Naive thymus-derived CD4-positive, alpha-beta T cell (primary cell): ENCODE measurements at regions of chr2 and their contacts with region 1.

Region 1: DNA sequence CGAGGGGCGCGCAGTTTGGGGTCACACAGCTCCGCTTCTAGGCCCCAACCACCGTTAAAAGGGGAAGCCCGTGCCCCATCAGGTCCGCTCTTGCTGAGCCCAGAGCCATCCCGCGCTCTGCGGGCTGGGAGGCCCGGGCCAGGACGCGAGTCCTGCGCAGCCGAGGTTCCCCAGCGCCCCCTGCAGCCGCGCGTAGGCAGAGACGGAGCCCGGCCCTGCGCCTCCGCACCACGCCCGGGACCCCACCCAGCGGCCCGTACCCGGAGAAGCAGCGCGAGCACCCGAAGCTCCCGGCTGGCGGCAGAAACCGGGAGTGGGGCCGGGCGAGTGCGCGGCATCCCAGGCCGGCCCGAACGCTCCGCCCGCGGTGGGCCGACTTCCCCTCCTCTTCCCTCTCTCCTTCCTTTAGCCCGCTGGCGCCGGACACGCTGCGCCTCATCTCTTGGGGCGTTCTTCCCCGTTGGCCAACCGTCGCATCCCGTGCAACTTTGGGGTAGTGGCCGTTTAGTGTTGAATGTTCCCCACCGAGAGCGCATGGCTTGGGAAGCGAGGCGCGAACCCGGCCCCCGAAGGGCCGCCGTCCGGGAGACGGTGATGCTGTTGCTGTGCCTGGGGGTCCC is at the start of gene ITGA4:
- DNase-seq: peak; percentile 77 to 89 (median 83)
- ATAC-seq: peak; percentile 92
- H3K4me3 ChIP-seq: peak within 1 kb of the TSS; percentile 91
- H3K4me3 Mint-ChIP-seq: peak within 1 kb of the TSS; percentile 89 to 99 (median 95)
- H3K27ac ChIP-seq: peak within 1 kb of the TSS; percentile 82
- H3K27ac Mint-ChIP-seq: peak within 1 kb of the TSS; percentile 81 to 98 (median 95)
- H3K4me1 ChIP-seq: peaks cover 13 to 24% of the 10 kb centered on the region in 2 donors
- H3K4me1 Mint-ChIP-seq: peaks cover 34 to 65% (median 54%) of the 10 kb centered on the region in 7 donors
- H3K27me3 ChIP-seq: no peaks in the 10 kb centered on the region
- H3K27me3 Mint-ChIP-seq: no peaks in the 10 kb centered on the region
- total RNA-seq, gene ITGA4: 135 to 212 (median 159) TPM

Region 2: GRCh38 chr2:180006781-180007579 is 1450.3 kb before region 1 on chr2 and contains the start of gene CWC22:
- CTCF ChIA-PET with region 1: no interaction called
- POLR2A ChIA-PET with region 1: no interaction called
- intact Hi-C with region 1: loop called in 1 of 2 experiments (anchors 2 kb)
- DNase-seq: peak; percentile 73 to 93 (median 89)
- ATAC-seq: peak; percentile 96
- H3K4me3 ChIP-seq: peak within 1 kb of the TSS; percentile 96
- H3K4me3 Mint-ChIP-seq: peak within 1 kb of the TSS; percentile 92 to 100 (median 96)
- H3K27ac ChIP-seq: peak within 1 kb of the TSS; percentile 93
- H3K27ac Mint-ChIP-seq: peak within 1 kb of the TSS; percentile 98 to 100 (median 99)
- H3K4me1 ChIP-seq: peaks cover 8 to 11% of the 10 kb centered on the region in 2 donors
- H3K4me1 Mint-ChIP-seq: peaks cover 19 to 54% (median 49%) of the 10 kb centered on the region in 7 donors
- H3K27me3 ChIP-seq: no peaks in the 10 kb centered on the region
- H3K27me3 Mint-ChIP-seq: peaks cover 0 to 3% (median 0%) of the 10 kb centered on the region in 5 donors
- total RNA-seq, gene CWC22: 14.4 to 32.0 (median 23.5) TPM

Region 3: GRCh38 chr2:180905002-180905401 is 552.2 kb before region 1 on chr2:
- CTCF ChIA-PET with region 1: no interaction called
- POLR2A ChIA-PET with region 1: no interaction called
- intact Hi-C with region 1: no loop called
- DNase-seq: no peak
- ATAC-seq: no peak
- H3K4me3 ChIP-seq: no peak overlapping the region
- H3K4me3 Mint-ChIP-seq: no peak overlapping the region
- H3K27ac ChIP-seq: no peak overlapping the region
- H3K27ac Mint-ChIP-seq: no peak overlapping the region
- H3K4me1 ChIP-seq: no peaks in the 10 kb centered on the region
- H3K4me1 Mint-ChIP-seq: no peaks in the 10 kb centered on the region
- H3K27me3 ChIP-seq: no peaks in the 10 kb centered on the region
- H3K27me3 Mint-ChIP-seq: peaks cover 5 to 35% (median 18%) of the 10 kb centered on the region in 5 donors

Region 4: GRCh38 chr2:181123798-181124231 is 333.4 kb before region 1 on chr2:
- CTCF ChIA-PET with region 1: interaction called, 4 read pairs
- POLR2A ChIA-PET with region 1: interaction called, 15 read pairs
- intact Hi-C with region 1: loop called (anchors 1 kb)
- DNase-seq: peak in 8 of 9 donors; percentile 54 to 91 (median 83)
- ATAC-seq: peak; percentile 98
- H3K4me3 ChIP-seq: peak overlapping the region; percentile 37
- H3K4me3 Mint-ChIP-seq: peak overlapping the region; percentile 73 to 92 (median 82)
- H3K27ac ChIP-seq: peak overlapping the region; percentile 83
- H3K27ac Mint-ChIP-seq: peak overlapping the region; percentile 94 to 100 (median 98)
- H3K4me1 ChIP-seq: peaks cover 39 to 47% of the 10 kb centered on the region in 2 donors
- H3K4me1 Mint-ChIP-seq: peaks cover 27 to 81% (median 78%) of the 10 kb centered on the region in 7 donors
- H3K27me3 ChIP-seq: no peaks in the 10 kb centered on the region
- H3K27me3 Mint-ChIP-seq: no peaks in the 10 kb centered on the region

Region 5: DNA sequence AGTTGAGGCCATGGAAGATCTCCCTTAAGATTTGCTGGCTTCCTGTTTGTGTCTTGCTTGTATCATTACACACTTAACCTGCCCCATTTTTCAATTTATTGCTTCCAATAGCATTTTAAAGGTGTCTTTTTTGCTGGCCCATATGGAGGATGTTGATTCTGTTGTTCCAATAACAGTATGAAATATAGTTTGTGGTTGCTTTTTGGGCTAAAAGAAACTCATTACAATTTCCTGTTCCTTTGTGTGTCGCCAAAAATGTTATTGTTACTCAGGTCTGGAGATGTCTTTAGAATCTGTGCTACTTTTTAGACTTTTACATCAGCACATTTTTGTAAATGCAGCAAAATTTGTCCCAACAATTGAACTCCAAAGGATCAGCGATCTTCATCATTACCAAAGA is 234.0 kb before region 1 on chr2:
- CTCF ChIA-PET with region 1: interaction called, 3 read pairs
- POLR2A ChIA-PET with region 1: interaction called, 4 read pairs
- intact Hi-C with region 1: loop called in 1 of 2 experiments (anchors 5 kb)
- DNase-seq: peak in 6 of 9 donors; percentile 13 to 54 (median 44)
- ATAC-seq: no peak
- H3K4me3 ChIP-seq: peak overlapping the region; percentile 0
- H3K4me3 Mint-ChIP-seq: peak overlapping the region in 9 of 10 donors; percentile 58 to 84 (median 66)
- H3K27ac ChIP-seq: peak overlapping the region; percentile 4
- H3K27ac Mint-ChIP-seq: peak overlapping the region; percentile 57 to 97 (median 88)
- H3K4me1 ChIP-seq: peaks cover 25% of the 10 kb centered on the region in 2 donors
- H3K4me1 Mint-ChIP-seq: peaks cover 7 to 64% (median 37%) of the 10 kb centered on the region in 7 donors
- H3K27me3 ChIP-seq: no peaks in the 10 kb centered on the region
- H3K27me3 Mint-ChIP-seq: no peaks in the 10 kb centered on the region

Region 6: DNA sequence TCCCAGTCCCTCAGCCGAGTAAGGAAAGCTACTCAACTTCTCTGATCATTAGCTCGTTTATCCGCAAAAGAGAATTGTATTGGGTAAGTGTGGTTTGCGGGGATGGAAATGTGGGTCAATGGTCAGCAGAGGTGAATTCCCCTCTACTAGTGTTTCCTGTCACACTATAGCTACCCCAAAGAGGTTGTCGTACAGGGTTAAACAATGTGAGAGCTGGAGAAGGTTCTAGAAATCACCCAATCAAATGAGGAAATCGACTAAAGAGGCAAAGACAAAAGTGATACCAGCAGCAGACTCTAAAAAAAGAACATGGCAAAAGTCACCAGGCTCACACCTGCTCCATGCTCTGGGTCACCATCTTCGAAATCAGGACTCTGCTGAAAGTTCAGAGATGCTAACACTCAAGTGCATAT is 144.7 kb before region 1 on chr2:
- CTCF ChIA-PET with region 1: interaction called, 15 read pairs
- POLR2A ChIA-PET with region 1: interaction called, 69 read pairs
- intact Hi-C with region 1: loop called in 1 of 2 experiments (anchors 1 kb)
- DNase-seq: peak in 2 of 9 donors; percentile 47 to 54
- ATAC-seq: peak; percentile 64
- H3K4me3 ChIP-seq: peak overlapping the region; percentile 4
- H3K4me3 Mint-ChIP-seq: peak overlapping the region; percentile 60 to 92 (median 80)
- H3K27ac ChIP-seq: peak overlapping the region; percentile 66
- H3K27ac Mint-ChIP-seq: peak overlapping the region; percentile 90 to 100 (median 96)
- H3K4me1 ChIP-seq: peaks cover 35 to 47% of the 10 kb centered on the region in 2 donors
- H3K4me1 Mint-ChIP-seq: peaks cover 28 to 67% (median 57%) of the 10 kb centered on the region in 7 donors
- H3K27me3 ChIP-seq: no peaks in the 10 kb centered on the region
- H3K27me3 Mint-ChIP-seq: no peaks in the 10 kb centered on the region

Region 7: GRCh38 chr2:181438261-181438660 is 19.0 kb before region 1 on chr2:
- CTCF ChIA-PET with region 1: interaction called, 4 read pairs
- POLR2A ChIA-PET with region 1: interaction called, 4 read pairs
- intact Hi-C with region 1: loop called (anchors 1 kb)
- DNase-seq: peak in 1 of 9 donors; percentile 34
- ATAC-seq: peak; percentile 37
- H3K4me3 ChIP-seq: no peak overlapping the region
- H3K4me3 Mint-ChIP-seq: no peak overlapping the region
- H3K27ac ChIP-seq: no peak overlapping the region
- H3K27ac Mint-ChIP-seq: peak overlapping the region in 1 of 9 donors; percentile 45
- H3K4me1 ChIP-seq: no peaks in the 10 kb centered on the region
- H3K4me1 Mint-ChIP-seq: peaks cover 0 to 28% (median 15%) of the 10 kb centered on the region in 7 donors
- H3K27me3 ChIP-seq: no peaks in the 10 kb centered on the region
- H3K27me3 Mint-ChIP-seq: peaks cover 0 to 2% (median 0%) of the 10 kb centered on the region in 5 donors

Region 8: GRCh38 chr2:181742922-181743722 is 285.9 kb after region 1 on chr2:
- CTCF ChIA-PET with region 1: no interaction called
- POLR2A ChIA-PET with region 1: no interaction called
- intact Hi-C with region 1: no loop called
- DNase-seq: peak in 5 of 9 donors; percentile 17 to 35 (median 29)
- ATAC-seq: peak; percentile 49
- H3K4me3 ChIP-seq: no peak overlapping the region
- H3K4me3 Mint-ChIP-seq: no peak overlapping the region
- H3K27ac ChIP-seq: no peak overlapping the region
- H3K27ac Mint-ChIP-seq: no peak overlapping the region
- H3K4me1 ChIP-seq: no peaks in the 10 kb centered on the region
- H3K4me1 Mint-ChIP-seq: no peaks in the 10 kb centered on the region
- H3K27me3 ChIP-seq: no peaks in the 10 kb centered on the region
- H3K27me3 Mint-ChIP-seq: peaks cover 0 to 22% (median 3%) of the 10 kb centered on the region in 5 donors

Region 9: GRCh38 chr2:181764095-181764963 is 307.1 kb after region 1 on chr2:
- CTCF ChIA-PET with region 1: no interaction called
- POLR2A ChIA-PET with region 1: no interaction called
- intact Hi-C with region 1: no loop called
- DNase-seq: no peak
- ATAC-seq: no peak
- H3K4me3 ChIP-seq: no peak overlapping the region
- H3K4me3 Mint-ChIP-seq: no peak overlapping the region
- H3K27ac ChIP-seq: no peak overlapping the region
- H3K27ac Mint-ChIP-seq: no peak overlapping the region
- H3K4me1 ChIP-seq: no peaks in the 10 kb centered on the region
- H3K4me1 Mint-ChIP-seq: peaks cover 0 to 1% (median 0%) of the 10 kb centered on the region in 7 donors
- H3K27me3 ChIP-seq: no peaks in the 10 kb centered on the region
- H3K27me3 Mint-ChIP-seq: peaks cover 0 to 11% (median 4%) of the 10 kb centered on the region in 5 donors